ENCODE measurements at regions of chr10 and their contacts with region 1.

Region 1: DNA sequence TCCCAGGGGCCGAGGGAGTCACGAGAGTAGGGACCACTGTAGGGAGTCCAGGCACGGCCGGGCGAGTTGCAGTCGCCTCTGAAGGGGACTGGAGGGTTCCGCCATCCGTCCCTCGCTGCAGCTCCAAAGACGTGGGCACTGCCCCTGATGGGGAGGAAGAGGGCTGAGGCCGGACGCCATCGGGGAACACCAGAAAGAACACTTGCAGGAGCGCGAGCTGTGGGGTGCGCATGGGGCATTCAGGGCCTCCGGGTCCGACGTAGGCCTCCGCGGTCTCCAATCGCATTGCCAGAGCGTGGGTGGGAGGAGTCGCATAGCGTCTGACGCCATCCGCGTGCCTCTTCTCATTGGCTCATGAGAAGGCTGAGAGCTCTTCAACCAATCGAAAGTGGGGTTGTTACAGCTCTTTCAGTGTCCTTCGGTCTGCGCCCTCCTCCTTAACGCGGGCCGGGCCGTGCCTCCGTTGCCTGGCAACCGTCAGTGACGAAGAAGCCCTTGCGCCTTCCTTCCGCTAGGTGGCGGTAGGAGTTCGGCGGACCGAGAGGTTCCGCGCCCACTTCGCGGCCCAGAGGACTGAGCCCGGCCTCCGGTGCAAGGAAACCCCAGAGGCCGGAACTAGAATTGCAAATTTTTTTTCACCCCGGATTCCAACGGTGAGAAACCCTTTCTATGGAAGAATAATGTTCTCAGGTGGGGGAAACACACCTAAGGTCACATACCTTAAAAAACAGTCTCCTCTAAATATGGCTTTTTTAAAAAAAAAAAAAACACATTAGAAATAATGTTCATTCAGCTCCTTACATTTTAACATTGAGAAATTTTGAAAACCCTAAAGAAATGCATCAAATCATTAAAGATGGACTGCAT is at the start of gene TCTN3:
- DNase-seq: peak; percentile 99
- total RNA-seq, gene TCTN3: 12.4 TPM

Region 2: DNA sequence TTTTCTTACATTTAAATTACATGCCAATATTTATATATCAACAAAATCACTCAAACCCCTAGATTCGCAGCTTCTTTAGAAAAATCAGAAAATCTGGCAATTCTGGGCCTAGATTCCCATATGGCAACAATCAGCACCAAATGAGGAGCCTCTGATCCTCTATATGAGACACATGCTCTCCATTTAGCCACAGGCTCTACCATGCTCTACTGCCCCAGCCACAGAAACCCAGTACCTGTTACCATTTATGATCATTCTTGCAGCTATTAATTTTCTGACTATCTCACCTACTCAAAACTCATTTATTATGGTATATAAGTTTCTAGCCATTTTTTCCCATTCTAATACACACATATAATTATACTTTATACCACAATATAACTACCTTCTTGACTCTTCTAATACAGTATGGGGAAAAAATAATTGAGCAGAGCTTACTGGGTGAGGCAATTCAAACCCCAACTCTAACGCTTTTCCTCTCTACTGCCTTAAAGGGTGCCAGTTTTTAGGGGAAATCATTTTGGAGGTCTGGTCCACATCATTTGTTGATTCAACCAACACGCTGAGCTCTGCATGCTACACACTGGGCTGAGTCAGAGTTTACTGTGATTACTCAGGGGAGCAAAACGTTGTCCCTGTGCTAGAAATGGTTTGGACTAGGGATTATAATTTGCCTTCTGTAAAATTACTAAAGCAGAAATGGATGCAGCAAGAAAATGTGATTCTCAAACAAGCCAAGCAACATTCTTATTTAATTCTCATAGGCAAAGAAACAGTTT is 414.7 kb before region 1 on chr10:
- intact Hi-C with region 1: no loop called
- DNase-seq: no peak

Region 3: DNA sequence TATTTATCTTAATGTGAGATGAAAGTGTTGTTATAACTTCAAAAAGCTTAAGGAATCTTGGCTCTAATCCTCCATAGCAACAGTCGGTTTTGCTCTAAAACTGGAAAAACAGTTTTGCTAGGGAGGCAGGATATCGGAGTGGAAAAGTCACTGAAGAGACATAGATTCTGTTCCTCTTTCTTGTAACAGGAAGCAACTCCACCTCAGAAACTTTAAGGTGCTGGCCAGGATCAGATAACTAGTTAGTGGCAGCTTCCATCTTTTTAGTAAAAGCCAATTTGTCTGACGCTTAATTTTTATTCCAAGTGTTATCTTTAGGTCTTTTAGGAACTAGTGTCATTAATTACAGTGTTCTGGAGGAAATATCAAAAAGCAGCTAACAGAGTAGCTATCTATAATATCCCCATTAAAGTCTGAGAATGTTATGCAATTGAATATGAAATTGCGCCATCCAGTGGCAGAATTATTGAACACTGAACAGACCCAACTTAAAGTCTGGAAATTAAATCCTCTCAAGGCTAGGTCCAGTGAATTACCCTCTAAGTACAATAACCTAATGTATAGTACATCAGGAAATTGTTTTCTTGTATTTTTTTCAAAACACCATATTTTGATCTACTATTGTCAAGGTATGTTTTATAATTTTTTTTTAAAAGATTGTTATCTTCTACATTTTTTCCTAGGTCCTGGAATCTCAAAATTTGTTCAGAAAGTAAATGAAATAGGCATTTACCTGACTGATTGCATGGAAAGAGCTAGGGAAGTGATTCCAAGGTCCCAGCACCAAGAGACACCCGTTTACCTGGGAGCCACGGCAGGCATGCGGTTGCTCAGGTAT is 148.0 kb after region 1 on chr10:
- intact Hi-C with region 1: loop called (anchors 1 kb)
- DNase-seq: no peak

Region 4: GRCh38 chr10:95864906-95865813 is 171.3 kb after region 1 on chr10:
- intact Hi-C with region 1: loop called (anchors 2 kb)
- DNase-seq: no peak

Region 5: GRCh38 chr10:96043033-96043932 is 349.4 kb after region 1 on chr10 and contains the start of gene CCNJ:
- intact Hi-C with region 1: loop called (anchors 5 kb)
- DNase-seq: peak; percentile 92
- total RNA-seq, gene CCNJ: 3.4 TPM

Measured in cardiac septum (tissue), 1 donor.